Activated CD4-positive, alpha-beta T cell treated with anti-CD3 and anti-CD28 coated beads for 36 hours (primary cell): ENCODE measurements at regions of chr6 and their contacts with region 1.

Region 1: DNA sequence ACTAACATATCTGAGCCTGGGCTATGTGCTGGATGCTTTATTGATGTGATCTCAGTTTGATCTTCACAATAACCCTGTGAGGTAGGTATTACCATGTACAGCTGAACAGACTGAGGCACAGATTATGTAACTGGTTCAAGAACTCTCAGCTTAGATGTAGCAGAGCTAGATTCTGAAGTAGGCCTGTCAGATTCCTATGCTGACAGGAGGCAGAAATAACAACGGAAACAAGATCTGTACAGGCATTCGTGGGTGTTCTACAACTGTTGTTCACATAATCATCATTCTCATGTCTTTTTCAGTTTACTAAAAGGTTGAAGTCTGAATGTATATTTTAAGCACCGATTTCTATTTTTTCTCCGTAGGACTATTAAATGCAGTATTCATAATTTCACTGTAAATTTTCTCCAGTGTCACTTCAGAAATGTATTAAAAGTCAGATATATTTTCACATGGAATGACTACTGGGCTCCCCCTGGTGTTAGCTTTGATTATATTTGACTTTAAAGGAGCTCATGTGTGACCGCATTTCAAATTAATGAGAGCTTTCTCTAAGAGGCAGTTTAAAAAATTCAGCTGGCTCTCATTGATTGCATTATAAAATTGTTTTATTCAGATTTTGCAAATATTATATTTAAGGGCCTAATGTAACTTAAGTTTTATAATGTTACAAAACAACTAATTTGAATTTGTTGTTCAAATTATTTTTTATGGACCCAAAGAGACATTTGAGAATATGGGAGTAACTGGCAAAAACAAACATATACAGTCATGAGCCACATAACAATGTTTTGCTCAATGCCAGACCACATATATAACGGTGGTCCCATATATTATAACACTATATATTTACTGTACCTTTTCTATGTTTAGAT is 36.4 kb upstream of the SLC17A4 start:
- DNase-seq: no peak
- ATAC-seq: no peak
- H3K4me3 Mint-ChIP-seq: no peak overlapping the region
- H3K27ac Mint-ChIP-seq: no peak overlapping the region
- H3K4me1 Mint-ChIP-seq: peaks cover 3% of the 10 kb centered on the region
- H3K27me3 Mint-ChIP-seq: peaks cover 13% of the 10 kb centered on the region

Region 2: DNA sequence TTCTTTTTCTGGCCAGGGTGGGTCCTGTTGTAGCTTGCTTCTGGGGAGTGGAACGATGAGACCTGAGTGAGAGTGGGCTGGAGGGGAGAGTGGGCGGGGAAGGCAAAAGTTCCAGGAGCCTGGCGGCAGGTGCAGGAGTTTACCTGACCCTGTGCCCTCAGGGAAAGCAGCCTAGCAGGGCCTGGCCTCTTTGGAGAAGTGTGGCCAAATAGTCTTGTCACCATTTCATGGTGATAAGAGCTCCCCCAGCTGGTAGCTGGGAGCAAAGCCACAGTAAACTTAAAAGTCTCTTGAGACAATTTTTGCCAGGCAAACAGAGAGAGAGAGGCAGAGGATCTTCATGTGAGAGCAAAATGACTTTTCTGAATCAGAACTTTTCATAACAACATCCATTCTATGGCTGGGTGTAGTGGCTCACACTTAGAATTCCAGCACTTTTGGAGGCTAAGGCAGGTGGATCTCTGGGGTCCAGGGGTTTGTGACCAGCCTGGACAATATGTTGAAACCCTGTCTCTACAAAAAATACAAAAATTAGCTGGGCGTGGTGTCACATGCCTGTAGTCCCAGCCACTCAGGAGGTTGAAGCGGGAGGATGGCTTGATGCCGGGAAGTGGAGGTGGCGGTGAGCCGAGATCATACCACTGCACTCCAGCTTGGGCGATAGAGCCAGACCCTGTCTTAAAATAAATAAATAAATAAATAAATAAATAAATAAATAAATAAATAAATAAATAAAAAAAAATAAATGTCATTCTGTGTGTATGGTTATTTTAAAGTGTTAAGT is 227.9 kb before region 1 on chr6:
- CTCF ChIA-PET with region 1: no interaction called
- POLR2A ChIA-PET with region 1: no interaction called
- intact Hi-C with region 1: no loop called
- DNase-seq: peak; percentile 81
- ATAC-seq: peak; percentile 86
- H3K4me3 Mint-ChIP-seq: no peak overlapping the region
- H3K27ac Mint-ChIP-seq: no peak overlapping the region
- H3K4me1 Mint-ChIP-seq: peaks cover 4% of the 10 kb centered on the region
- H3K27me3 Mint-ChIP-seq: no peaks in the 10 kb centered on the region

Region 3: DNA sequence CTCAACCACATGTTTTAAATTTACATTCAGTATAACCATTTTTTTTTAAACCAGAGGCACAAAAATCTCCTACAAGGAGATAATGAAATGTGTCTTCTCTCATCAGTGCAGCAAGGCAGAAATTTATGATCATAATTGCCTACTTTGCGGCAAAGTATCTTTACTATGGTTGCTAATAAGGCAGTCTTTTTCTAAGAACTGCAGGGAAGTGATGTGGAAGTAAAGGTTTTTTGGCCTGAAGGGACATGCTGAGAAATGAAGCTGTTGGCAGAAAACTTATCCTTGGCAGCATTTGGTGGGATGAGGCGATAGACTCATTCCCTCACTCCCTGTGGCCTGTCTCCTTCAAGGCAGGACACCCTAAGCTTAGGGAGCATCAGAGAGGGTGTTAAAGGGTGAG is 17.3 kb before region 1 on chr6:
- CTCF ChIA-PET with region 1: interaction called, 18 read pairs
- POLR2A ChIA-PET with region 1: no interaction called
- intact Hi-C with region 1: no loop called
- DNase-seq: no peak
- ATAC-seq: no peak
- H3K4me3 Mint-ChIP-seq: no peak overlapping the region
- H3K27ac Mint-ChIP-seq: no peak overlapping the region
- H3K4me1 Mint-ChIP-seq: no peaks in the 10 kb centered on the region
- H3K27me3 Mint-ChIP-seq: peaks cover 14% of the 10 kb centered on the region

Region 4: DNA sequence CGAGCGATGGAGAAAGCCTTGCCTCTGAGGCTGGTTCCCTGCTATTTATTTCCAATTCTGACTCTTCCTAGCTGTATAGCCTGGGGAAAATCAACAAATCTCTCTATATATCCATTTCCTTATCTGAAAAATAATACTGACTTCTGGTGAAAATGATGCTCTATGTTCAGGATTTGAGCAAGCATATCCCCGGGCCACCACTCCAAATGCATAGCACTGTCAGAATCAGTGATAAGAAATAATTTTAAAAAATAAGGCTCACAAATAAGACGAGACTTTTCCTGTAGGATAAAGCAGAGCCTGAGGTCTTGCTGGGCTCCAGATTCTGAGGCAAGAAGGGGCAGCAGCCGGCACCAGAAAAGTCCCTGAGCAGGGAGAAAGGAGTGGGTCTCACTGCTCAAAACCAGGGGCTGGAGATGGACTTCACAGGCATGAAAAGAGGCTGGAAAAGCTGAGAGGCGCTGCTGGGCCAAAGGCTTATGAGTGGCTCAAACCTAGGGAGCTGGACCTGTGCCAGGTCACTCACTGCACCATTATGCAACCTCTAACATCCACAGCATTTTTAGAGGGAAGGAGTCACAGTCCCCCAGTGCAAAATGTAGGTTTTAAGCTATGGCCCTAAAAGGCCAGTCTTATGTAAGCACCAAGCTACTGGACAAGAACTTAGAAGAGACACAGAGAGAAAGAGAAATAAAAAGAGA is 11.6 kb before region 1 on chr6:
- CTCF ChIA-PET with region 1: interaction called, 18 read pairs
- POLR2A ChIA-PET with region 1: no interaction called
- intact Hi-C with region 1: no loop called
- DNase-seq: no peak
- ATAC-seq: no peak
- H3K4me3 Mint-ChIP-seq: no peak overlapping the region
- H3K27ac Mint-ChIP-seq: no peak overlapping the region
- H3K4me1 Mint-ChIP-seq: no peaks in the 10 kb centered on the region
- H3K27me3 Mint-ChIP-seq: peaks cover 13% of the 10 kb centered on the region

Region 5: GRCh38 chr6:25889877-25890853 is 172.1 kb after region 1 on chr6:
- CTCF ChIA-PET with region 1: interaction called, 6 read pairs
- POLR2A ChIA-PET with region 1: no interaction called
- intact Hi-C with region 1: loop called (anchors 1 to 2 kb)
- DNase-seq: peak; percentile 29
- ATAC-seq: peak; percentile 16
- H3K4me3 Mint-ChIP-seq: no peak overlapping the region
- H3K27ac Mint-ChIP-seq: no peak overlapping the region
- H3K4me1 Mint-ChIP-seq: no peaks in the 10 kb centered on the region
- H3K27me3 Mint-ChIP-seq: peaks cover 4% of the 10 kb centered on the region

Region 6: DNA sequence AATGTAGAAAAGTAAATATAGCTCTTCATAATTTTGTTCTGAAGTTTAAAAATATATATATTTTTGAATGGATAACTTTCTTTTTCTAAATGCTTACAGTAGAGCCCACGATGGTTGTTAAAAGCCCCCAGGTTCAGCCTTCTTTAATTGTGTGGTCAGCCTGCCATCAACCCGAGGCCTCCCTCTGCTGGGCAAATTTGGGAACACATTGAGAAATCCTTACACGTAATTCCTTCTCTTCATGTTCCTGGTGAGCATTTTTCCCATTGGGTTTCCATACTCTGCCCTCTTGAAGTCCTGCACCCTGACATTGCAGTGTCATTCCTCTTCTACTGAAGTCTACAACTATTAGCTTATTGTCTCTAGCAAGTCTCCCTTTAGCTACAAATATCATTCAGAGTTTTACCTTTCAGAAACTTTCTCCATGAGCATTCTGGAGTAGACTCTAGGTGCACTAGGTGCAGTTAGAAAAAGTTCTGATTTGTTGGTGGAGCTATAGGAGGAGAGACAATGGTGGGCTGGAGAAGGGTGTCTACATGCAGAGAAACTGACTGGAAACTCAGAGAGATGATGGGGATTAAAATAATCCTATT is 285.1 kb after region 1 on chr6:
- CTCF ChIA-PET with region 1: interaction called, 13 read pairs
- POLR2A ChIA-PET with region 1: no interaction called
- intact Hi-C with region 1: loop called in 1 of 2 experiments (anchors 2 kb)
- DNase-seq: peak; percentile 65
- ATAC-seq: peak; percentile 47
- H3K4me3 Mint-ChIP-seq: no peak overlapping the region
- H3K27ac Mint-ChIP-seq: no peak overlapping the region
- H3K4me1 Mint-ChIP-seq: peaks cover 3% of the 10 kb centered on the region
- H3K27me3 Mint-ChIP-seq: no peaks in the 10 kb centered on the region